ENCODE measurements at regions of chr11 and their contacts with region 1.

Region 1: GRCh38 chr11:57324886-57325734 is at the start of gene TNKS1BP1:
- DNase-seq: peak; percentile 90
- ATAC-seq: peak; percentile 91
- H3K4me3 Mint-ChIP-seq: peak within 1 kb of the TSS; percentile 80
- H3K27ac Mint-ChIP-seq: peak within 1 kb of the TSS; percentile 94
- H3K4me1 Mint-ChIP-seq: peaks cover 62% of the 10 kb centered on the region
- H3K27me3 Mint-ChIP-seq: no peaks in the 10 kb centered on the region
- total RNA-seq, gene TNKS1BP1: 10.5 to 10.9 TPM

Region 2: GRCh38 chr11:57202281-57202680 is 122.8 kb before region 1 on chr11:
- CTCF ChIA-PET with region 1: no interaction called
- POLR2A ChIA-PET with region 1: no interaction called
- DNase-seq: no peak
- ATAC-seq: no peak
- H3K4me3 Mint-ChIP-seq: no peak overlapping the region
- H3K27ac Mint-ChIP-seq: no peak overlapping the region
- H3K4me1 Mint-ChIP-seq: no peaks in the 10 kb centered on the region
- H3K27me3 Mint-ChIP-seq: peaks cover 6% of the 10 kb centered on the region

Region 3: GRCh38 chr11:57300785-57301184 is 24.3 kb before region 1 on chr11:
- CTCF ChIA-PET with region 1: no interaction called
- POLR2A ChIA-PET with region 1: no interaction called
- DNase-seq: no peak
- ATAC-seq: no peak
- H3K4me3 Mint-ChIP-seq: no peak overlapping the region
- H3K27ac Mint-ChIP-seq: no peak overlapping the region
- H3K4me1 Mint-ChIP-seq: no peaks in the 10 kb centered on the region
- H3K27me3 Mint-ChIP-seq: no peaks in the 10 kb centered on the region

Region 4: GRCh38 chr11:57311109-57311936 is 13.8 kb before region 1 on chr11:
- CTCF ChIA-PET with region 1: interaction called, 13 read pairs
- POLR2A ChIA-PET with region 1: interaction called, 14 read pairs
- DNase-seq: peak; percentile 90
- ATAC-seq: peak; percentile 97
- H3K4me3 Mint-ChIP-seq: peak overlapping the region; percentile 70
- H3K27ac Mint-ChIP-seq: peak overlapping the region; percentile 70
- H3K4me1 Mint-ChIP-seq: peaks cover 23% of the 10 kb centered on the region
- H3K27me3 Mint-ChIP-seq: no peaks in the 10 kb centered on the region

Region 5: GRCh38 chr11:57335343-57336110 is 10.4 kb after region 1 on chr11 and contains the start of gene SSRP1:
- CTCF ChIA-PET with region 1: interaction called, 19 read pairs
- POLR2A ChIA-PET with region 1: interaction called, 55 read pairs
- DNase-seq: peak; percentile 90
- ATAC-seq: peak; percentile 96
- H3K4me3 Mint-ChIP-seq: peak within 1 kb of the TSS; percentile 92
- H3K27ac Mint-ChIP-seq: peak within 1 kb of the TSS; percentile 99
- H3K4me1 Mint-ChIP-seq: peaks cover 39% of the 10 kb centered on the region
- H3K27me3 Mint-ChIP-seq: peaks cover 7% of the 10 kb centered on the region
- total RNA-seq, gene SSRP1: 185 to 191 TPM